ENCODE measurements at regions of chr6 and their contacts with region 1.

Region 1: DNA sequence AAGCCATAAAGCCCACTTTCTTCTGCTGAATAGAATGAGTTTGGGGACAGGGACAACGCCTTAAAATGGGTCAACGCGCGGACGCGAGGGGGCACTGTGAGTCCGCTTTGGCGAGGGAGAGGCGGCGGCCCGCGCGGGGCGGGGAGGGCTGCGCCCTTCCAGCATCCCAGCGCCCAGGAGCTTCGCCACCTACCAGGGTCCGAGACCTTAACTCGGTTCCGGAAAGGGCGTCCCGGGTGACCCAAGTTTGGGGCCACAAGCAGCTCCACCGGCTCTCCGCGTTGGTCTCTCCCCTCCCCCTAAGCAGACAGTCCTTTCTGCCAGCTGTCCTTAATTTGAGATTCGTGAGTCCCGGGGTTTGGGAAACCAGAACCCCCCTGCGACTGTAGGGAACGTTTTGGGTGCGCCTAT is 1.8 kb upstream of the SAMD5 start:
- DNase-seq: peak; percentile 60 to 96 (median 75)

Region 2: GRCh38 chr6:147651249-147652063 is 144.7 kb after region 1 on chr6:
- intact Hi-C with region 1: loop called (anchors 10 kb)
- DNase-seq: no peak

Region 3: GRCh38 chr6:148166339-148166968 is 659.7 kb after region 1 on chr6:
- intact Hi-C with region 1: loop called (anchors 1 kb)
- DNase-seq: no peak

Region 4: DNA sequence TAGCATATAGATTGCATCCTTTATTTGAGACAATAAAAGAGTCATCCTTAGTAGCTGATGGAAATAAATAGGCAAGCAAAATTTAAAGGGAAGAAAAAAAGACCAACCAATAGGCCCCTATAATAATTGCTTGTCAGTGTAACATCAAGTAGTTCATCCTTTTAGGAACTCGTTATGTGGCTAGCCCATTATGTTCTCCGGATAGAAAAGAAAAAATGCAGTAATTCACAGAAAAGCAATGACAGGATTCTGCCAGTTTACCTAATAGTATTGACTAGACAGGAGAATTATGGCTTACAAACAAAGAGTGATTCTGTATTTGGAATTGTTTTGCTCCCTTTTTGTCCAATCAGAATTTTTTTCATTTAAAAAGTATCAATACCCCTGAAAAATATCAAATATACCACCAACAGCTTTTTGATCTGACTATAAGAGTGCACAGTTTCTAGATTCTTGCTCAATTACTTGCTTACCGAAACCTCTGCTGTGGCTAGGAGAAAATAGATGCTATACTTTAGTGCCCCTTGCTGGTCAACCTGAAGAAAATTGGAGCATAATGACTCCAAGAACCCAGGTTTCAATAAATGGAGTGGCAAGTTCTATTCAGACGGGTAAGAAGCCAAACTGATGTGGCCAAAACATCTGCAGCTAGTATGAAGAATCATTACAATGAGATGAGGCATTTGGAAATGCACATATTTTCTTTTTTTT is 744.4 kb after region 1 on chr6:
- intact Hi-C with region 1: loop called (anchors 10 kb)
- DNase-seq: no peak

Region 5: GRCh38 chr6:148464319-148465010 is 957.8 kb after region 1 on chr6:
- intact Hi-C with region 1: loop called (anchors 10 kb)
- DNase-seq: peak in 8 of 10 donors; percentile 43 to 88 (median 77)

Region 6: DNA sequence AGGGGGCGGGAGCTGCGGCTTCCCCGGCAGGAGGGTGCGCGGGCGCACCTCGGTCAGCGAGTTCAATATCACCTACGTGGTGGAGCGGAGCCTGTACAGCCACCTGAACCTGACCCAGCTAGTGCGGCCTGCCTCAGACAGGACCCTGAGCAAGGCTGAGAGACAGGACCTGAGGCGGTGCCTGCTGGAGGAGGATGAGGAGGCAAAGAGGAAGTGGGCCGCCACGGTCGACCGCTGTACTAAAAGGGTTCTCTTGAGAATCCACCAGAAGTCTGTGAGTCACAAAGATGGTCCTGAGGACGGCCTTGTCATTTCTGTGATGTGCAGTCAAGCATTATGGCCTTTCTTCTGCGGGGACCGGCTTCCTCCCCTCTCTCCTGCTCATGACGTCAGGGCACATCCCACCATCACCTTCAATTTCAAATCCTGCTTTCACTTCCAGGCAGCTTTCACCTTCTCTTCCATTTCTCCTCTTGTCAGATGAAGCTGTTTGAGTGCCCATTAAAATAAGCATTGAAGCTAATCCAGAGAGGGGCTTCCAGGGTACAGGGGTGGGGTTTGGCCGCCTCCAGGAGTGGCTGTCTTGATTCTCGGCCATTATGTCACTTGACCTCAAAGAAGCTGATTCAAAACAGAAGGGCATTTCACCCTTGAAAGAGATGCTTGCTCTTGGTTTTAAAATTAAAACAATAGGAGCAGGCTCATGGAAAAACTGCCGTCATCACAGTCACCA is 1013.6 kb after region 1 on chr6:
- intact Hi-C with region 1: loop called (anchors 10 kb)
- DNase-seq: peak in 1 of 10 donors; percentile 80